ENCODE measurements at regions of chr3 and their contacts with region 1.

Region 1: DNA sequence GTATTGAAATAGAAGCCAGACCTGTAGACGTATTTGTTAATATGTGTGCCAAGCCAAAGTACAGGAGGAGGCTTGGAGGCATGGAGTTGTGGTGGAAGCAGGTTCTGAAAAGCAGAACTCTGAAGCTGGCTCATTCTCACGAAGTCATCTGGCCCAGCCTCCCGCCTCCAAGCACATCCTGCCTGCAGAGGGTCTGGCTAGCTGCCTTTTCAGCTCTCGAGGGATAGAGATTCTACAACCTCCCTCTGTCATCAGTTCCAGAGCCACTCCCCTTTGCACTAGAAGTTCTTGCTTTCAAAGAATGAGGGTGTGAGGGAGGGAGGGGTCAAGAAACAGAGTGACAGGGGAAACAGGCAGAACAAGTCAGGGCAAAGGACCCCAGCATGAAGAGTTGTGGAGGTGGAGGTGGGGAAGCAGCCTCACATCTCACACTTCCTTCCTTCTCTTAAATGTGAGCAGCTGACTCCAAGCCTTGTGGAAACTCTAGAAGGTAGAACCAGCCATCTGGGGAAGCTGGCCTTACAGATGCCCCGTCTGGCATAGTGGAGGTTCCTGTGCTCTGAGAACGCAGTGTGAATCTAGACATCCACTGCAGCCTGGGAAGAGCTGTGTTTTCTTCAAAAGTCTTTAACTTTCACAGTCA is 95.3 kb downstream of the SLC49A4 start:
- DNase-seq: peak; percentile 92
- H3K27ac ChIP-seq: peak overlapping the region; percentile 23
- CTCF ChIP-seq: no peak

Region 2: GRCh38 chr3:122784436-122784835 is 105.8 kb before region 1 on chr3:
- CTCF ChIA-PET with region 1: no interaction called
- POLR2A ChIA-PET with region 1: no interaction called
- DNase-seq: peak; percentile 52
- H3K27ac ChIP-seq: no peak overlapping the region
- CTCF ChIP-seq: no peak

Region 3: DNA sequence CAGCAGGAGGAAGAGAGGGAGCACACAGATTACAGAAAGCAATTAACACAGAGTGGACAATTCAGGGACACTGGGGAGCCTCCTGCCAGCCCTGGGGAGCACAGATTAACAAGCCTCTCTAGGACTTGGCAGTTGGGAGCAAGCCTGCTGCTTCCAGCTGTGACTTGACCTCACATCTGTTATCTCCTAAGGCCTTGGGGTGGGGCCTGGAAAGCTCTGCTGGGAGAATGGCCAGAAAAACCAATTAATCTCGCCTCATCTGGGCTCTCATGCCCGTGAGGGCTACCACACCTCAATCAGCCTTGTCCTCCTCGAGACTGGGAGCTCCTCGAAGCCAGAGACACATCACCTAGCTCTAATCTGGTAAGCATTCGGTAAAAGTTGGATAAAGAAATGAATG is 98.3 kb after region 1 on chr3:
- CTCF ChIA-PET with region 1: no interaction called
- POLR2A ChIA-PET with region 1: no interaction called
- DNase-seq: no peak
- H3K27ac ChIP-seq: no peak overlapping the region
- CTCF ChIP-seq: no peak

Region 4: DNA sequence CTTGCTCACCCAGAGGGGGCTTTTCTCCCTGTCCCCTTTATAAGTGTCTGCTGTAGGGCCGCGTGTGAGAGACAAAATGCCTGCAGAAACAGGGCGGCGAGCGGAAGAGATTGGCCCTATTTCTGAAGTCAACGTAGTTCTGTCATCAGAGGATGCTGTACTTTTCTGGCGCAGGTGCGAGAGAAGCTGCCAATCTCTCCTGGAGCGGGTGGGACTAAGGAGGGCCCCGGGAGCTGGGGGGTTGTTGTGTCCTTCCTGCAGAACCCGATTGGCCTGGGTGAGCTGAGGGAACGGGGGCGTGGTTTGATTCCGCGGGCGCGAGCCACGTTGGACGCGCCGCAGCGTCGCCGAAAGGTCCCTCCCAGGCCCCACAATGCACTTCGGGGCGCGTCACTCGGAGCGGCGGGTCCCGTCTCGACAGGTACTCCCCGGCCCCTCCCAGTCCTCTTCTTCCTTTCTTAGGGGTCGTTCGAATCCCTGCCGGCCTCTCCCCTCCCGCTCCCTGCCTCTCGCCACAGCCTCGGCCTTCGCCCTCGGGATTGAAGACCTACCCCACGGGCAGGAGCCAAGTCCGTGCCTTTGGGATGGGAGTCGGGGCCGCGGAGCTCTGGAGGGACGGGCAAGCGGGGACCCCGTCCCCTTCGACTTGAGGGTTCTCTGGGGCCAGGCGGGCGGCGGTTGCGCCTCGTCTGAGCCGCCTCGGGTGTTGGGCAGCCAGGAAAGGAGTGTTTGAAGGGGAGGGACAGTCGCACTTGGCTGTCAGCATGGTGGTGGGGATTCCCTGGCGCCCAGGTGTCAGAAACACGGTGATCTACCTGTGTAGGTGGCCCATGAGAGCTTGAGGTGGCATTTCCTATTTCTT is 311.6 kb after region 1 on chr3 and contains the start of gene SEC22A:
- CTCF ChIA-PET with region 1: interaction called, 13 read pairs
- POLR2A ChIA-PET with region 1: no interaction called
- DNase-seq: peak; percentile 97
- H3K27ac ChIP-seq: peak within 1 kb of the TSS; percentile 71
- CTCF ChIP-seq: no peak

Measured in RWPE1 (cell line).